Right cardiac atrium (tissue), 5 donors: ENCODE measurements at regions of chr10 and their contacts with region 1.

Region 1: GRCh38 chr10:47152861-47153349 is 147.1 kb upstream of the GDF10 start:
- DNase-seq: no peak
- ATAC-seq: no peak
- H3K4me3 ChIP-seq: no peak overlapping the region
- H3K27ac ChIP-seq: no peak overlapping the region
- H3K4me1 ChIP-seq: no peaks in the 10 kb centered on the region
- H3K27me3 ChIP-seq: no peaks in the 10 kb centered on the region

Region 2: DNA sequence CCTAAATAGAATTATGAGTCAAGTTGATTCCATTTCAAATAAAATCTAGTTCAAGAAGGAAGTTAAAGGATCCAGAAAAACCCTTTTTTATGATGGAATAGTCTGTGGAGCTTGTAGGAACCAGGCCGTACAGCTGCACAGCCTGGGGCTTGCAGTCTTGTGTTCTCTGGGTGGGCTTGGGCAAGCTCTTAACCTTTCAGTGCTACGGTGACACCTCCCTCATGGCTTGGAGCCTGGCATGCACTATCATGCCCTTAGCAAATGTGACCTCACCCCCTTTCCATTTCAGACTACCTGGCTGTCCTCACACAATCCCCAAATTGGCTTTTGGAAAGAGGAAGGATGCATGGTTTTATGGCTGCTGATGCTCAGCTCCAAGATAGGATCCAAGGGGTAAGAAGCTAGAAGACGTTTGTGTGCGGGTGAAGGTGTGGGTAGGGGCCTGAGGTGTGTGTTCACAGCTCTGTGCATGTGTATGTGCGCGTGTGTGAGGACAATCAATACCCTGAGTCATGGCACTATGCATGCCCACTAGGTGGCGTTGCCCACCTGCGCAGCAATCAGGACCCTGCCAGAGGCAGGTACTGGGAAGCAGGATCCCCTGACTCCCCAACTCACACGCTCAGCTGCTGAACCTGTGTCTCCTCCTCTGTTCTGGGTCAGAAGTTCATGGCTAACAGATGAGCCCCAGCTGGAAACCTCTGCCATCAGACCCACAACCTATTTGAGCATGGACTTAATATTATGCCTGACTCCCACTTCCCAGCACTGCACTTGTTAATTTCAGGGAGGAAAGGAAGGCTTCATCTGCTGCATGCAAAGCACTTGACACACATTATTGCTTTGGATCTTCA is 128.3 kb before region 1 on chr10:
- intact Hi-C with region 1: no loop called
- DNase-seq: peak in 2 of 3 donors; percentile 76 to 80
- ATAC-seq: peak in 1 of 2 donors; percentile 65
- H3K4me3 ChIP-seq: no peak overlapping the region
- H3K27ac ChIP-seq: no peak overlapping the region
- H3K4me1 ChIP-seq: no peaks in the 10 kb centered on the region
- H3K27me3 ChIP-seq: no peaks in the 10 kb centered on the region

Region 3: GRCh38 chr10:47081264-47081663 is 71.6 kb before region 1 on chr10:
- intact Hi-C with region 1: loop called in 1 of 4 experiments (anchors 10 kb)
- DNase-seq: no peak
- ATAC-seq: no peak
- H3K4me3 ChIP-seq: no peak overlapping the region
- H3K27ac ChIP-seq: no peak overlapping the region
- H3K4me1 ChIP-seq: no peaks in the 10 kb centered on the region
- H3K27me3 ChIP-seq: no peaks in the 10 kb centered on the region